WTC11 (cell line): ENCODE measurements at regions of chr19 and their contacts with region 1.

Region 1: GRCh38 chr19:55467236-55468053 is 2.9 kb upstream of the C19orf85 start:
- DNase-seq: peak; percentile 77
- ATAC-seq: peak; percentile 78
- H3K4me3 Mint-ChIP-seq: no peak overlapping the region
- H3K27ac Mint-ChIP-seq: no peak overlapping the region
- H3K4me1 Mint-ChIP-seq: peaks cover 27% of the 10 kb centered on the region
- H3K27me3 Mint-ChIP-seq: peaks cover 33% of the 10 kb centered on the region
- CTCF ChIP-seq: peak; percentile 98

Region 2: DNA sequence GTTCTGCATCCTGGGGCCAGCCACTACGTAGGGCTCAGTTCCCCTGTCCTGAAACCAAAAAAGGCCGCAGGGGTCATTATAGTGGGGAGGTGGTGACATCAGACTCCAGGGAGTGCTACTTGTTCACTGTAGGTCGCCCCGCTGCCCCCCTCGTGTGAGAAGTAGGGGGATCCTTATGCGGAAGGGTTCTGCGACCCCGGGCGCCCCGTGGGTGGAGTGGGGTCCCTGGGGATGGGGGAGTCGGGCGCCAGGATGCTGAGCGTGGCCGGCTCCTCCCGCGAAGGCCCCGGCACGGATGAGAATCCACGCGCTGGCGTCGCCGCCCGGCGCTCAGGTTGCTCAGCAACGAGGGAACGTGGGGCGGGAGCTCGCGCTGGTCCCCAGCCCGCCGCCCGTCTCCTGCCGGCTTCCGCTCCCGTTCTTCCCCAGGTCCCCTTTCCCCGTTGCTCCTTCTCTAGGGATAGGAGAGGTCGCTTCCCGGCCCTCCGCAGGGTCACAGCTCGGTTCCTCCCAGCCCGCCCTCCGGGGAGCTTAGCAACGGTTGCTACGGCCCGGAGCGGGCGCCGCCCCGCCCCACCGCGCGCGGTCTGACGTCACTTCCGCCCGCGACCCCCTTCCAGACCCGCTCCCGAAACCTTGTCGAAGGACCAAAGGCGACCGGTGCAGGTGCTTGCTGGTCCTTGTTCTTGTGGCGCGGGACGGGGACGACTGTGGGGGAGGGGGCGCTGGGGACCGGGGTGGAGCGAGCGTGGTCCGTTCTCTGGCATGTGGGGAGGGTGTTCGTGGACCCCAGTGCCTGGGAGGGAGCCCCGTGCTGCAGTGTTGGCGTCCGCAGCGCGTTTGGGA is 17.4 kb after region 1 on chr19 and contains the start of gene NAT14:
- CTCF ChIA-PET with region 1: interaction called, 32 read pairs
- POLR2A ChIA-PET with region 1: no interaction called
- DNase-seq: peak; percentile 89
- ATAC-seq: peak; percentile 58
- H3K4me3 Mint-ChIP-seq: peak within 1 kb of the TSS; percentile 82
- H3K27ac Mint-ChIP-seq: peak within 1 kb of the TSS; percentile 87
- H3K4me1 Mint-ChIP-seq: peaks cover 23% of the 10 kb centered on the region
- H3K27me3 Mint-ChIP-seq: no peaks in the 10 kb centered on the region
- CTCF ChIP-seq: no peak
- total RNA-seq, gene NAT14: 71.9 to 87.7 TPM (median 74.8 TPM) in 3 replicates

Region 3: GRCh38 chr19:55516878-55517620 is 49.6 kb after region 1 on chr19:
- CTCF ChIA-PET with region 1: interaction called, 15 read pairs
- POLR2A ChIA-PET with region 1: no interaction called
- DNase-seq: peak; percentile 96
- ATAC-seq: peak; percentile 99
- H3K4me3 Mint-ChIP-seq: peak overlapping the region; percentile 58
- H3K27ac Mint-ChIP-seq: no peak overlapping the region
- H3K4me1 Mint-ChIP-seq: no peaks in the 10 kb centered on the region
- H3K27me3 Mint-ChIP-seq: peaks cover 24% of the 10 kb centered on the region
- CTCF ChIP-seq: peak; percentile 32; the same call in 1 of the 2 replicates

Region 4: DNA sequence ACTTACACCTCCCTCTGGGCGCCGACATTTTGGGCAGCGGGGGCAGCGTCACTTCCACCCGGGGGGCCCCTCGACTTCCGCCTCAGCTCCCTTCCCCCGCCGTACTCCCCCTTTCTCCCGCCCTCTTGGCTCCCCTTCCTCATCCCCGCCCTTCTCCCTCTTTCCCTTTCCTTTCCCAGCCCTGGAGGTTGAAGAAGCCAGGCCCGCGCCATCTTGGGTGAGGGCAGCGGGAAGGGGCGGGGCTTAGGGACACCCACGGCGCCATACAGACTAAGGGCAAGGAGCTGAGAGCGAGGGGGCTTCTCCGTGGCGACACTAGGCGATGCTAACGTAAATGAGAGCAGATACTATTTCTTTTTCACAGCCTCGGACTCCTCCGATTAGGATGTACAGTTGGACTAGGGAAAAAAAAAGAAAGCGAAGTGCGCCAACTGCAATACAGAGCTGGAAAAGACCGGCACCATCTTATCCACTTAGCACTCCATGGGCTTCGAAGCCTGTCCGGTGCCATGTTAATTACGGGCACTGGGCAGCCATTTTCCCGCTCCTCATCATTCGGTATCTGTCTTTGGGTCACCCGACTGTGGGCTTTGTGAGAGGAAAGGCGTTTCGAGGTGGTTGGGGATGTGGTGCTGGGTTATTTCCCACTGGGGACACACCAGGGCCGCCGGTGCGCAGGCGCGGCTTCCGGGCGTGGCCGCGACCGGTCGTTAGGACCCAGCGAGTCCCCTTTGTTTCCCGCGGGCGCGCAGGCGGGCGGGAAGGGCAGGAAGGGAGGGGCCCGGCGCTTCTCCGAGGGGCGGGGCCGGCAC is 132.2 kb after region 1 on chr19 and contains the start of gene FIZ1:
- CTCF ChIA-PET with region 1: interaction called, 24 read pairs
- POLR2A ChIA-PET with region 1: no interaction called
- DNase-seq: peak; percentile 98
- ATAC-seq: peak; percentile 54
- H3K4me3 Mint-ChIP-seq: peak within 1 kb of the TSS; percentile 98
- H3K27ac Mint-ChIP-seq: peak within 1 kb of the TSS; percentile 100
- H3K4me1 Mint-ChIP-seq: peaks cover 29% of the 10 kb centered on the region
- H3K27me3 Mint-ChIP-seq: no peaks in the 10 kb centered on the region; the same call in 1 of the 2 replicates
- CTCF ChIP-seq: no peak
- total RNA-seq, gene FIZ1: 20.1 to 22.7 TPM (median 20.6 TPM) in 3 replicates

Region 5: GRCh38 chr19:55624109-55625003 is 156.9 kb after region 1 on chr19 and contains the start of gene ZNF784:
- CTCF ChIA-PET with region 1: interaction called, 10 read pairs
- POLR2A ChIA-PET with region 1: no interaction called
- DNase-seq: peak; percentile 92
- ATAC-seq: peak; percentile 87
- H3K4me3 Mint-ChIP-seq: peak within 1 kb of the TSS; percentile 76
- H3K27ac Mint-ChIP-seq: peak within 1 kb of the TSS; percentile 90
- H3K4me1 Mint-ChIP-seq: peaks cover 15% of the 10 kb centered on the region
- H3K27me3 Mint-ChIP-seq: peaks cover 18% of the 10 kb centered on the region
- CTCF ChIP-seq: no peak
- total RNA-seq, gene ZNF784: 9.9 to 12.1 TPM (median 11.4 TPM) in 3 replicates